BJ (cell line): ENCODE measurements at regions of chr7 and their contacts with region 1.

Region 1: DNA sequence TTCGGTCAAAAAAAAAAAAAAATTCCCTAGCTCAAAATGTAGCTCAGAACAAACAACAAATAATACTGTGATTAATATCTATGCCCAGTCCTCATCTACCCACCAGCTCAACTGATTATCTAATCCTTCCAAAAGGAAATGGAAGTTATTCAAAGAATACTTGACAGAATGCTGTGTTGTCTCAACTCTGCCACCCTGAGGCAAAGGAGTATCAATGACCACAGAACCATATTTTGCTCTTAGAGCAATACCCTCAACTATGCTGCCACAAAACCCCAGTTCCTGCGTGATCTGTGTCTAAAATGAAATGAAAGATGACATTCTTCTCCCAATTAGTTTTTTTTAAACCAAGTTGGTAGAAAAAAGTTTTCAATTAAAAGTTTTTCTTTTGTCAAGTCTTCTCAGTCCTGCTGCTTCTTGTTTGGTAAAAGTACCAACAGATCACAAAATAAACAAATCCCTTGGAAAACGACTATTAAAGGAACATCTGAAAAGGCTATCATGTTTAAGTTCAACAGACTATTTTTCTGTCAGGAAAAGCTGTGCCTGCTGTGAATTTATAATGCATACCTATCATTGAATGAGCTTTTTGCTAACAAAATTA is 21.6 kb downstream of the RBM28 start:
- DNase-seq: no peak
- H3K4me3 ChIP-seq: no peak overlapping the region
- H3K27me3 ChIP-seq: no peaks in the 10 kb centered on the region
- CTCF ChIP-seq: peak; percentile 67

Region 2: GRCh38 chr7:127844707-127845331 is 477.3 kb before region 1 on chr7:
- CTCF ChIA-PET with region 1: no interaction called
- POLR2A ChIA-PET with region 1: no interaction called
- DNase-seq: no peak
- H3K4me3 ChIP-seq: no peak overlapping the region
- H3K27me3 ChIP-seq: no peaks in the 10 kb centered on the region
- CTCF ChIP-seq: no peak

Region 3: GRCh38 chr7:127927348-127927696 is 394.8 kb before region 1 on chr7:
- CTCF ChIA-PET with region 1: no interaction called
- POLR2A ChIA-PET with region 1: no interaction called
- DNase-seq: no peak
- H3K4me3 ChIP-seq: no peak overlapping the region
- H3K27me3 ChIP-seq: no peaks in the 10 kb centered on the region
- CTCF ChIP-seq: no peak

Region 4: GRCh38 chr7:128209229-128210035 is 112.7 kb before region 1 on chr7:
- CTCF ChIA-PET with region 1: interaction called, 14 read pairs
- POLR2A ChIA-PET with region 1: no interaction called
- DNase-seq: no peak
- H3K4me3 ChIP-seq: no peak overlapping the region
- H3K27me3 ChIP-seq: peaks cover 15% of the 10 kb centered on the region
- CTCF ChIP-seq: peak; percentile 97

Region 5: GRCh38 chr7:128217030-128217805 is 104.9 kb before region 1 on chr7:
- CTCF ChIA-PET with region 1: interaction called, 14 read pairs
- POLR2A ChIA-PET with region 1: no interaction called
- DNase-seq: peak; percentile 34
- H3K4me3 ChIP-seq: no peak overlapping the region
- H3K27me3 ChIP-seq: no peaks in the 10 kb centered on the region; the same call in 1 of the 2 replicates
- CTCF ChIP-seq: no peak

Region 6: DNA sequence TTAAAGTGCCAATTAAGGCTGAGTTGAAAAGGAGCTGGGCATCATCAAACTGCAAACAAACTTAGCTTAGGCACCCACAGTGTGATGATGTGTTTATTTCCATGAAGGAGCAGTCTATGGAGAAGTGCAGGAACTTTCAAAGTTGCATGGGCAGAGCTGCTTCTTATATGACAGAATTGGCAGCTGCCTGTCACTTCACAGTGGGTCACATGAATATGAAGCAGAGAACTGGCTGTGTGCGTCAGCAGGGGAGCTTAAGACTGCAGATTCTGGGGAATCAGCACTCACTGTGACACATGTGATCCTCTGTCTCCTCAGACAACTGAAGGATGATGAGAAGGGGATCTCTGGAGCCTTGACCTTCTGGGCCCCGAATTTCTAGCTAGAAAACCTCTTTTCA is 15.1 kb before region 1 on chr7:
- CTCF ChIA-PET with region 1: interaction called, 12 read pairs
- POLR2A ChIA-PET with region 1: no interaction called
- DNase-seq: no peak
- H3K4me3 ChIP-seq: no peak overlapping the region
- H3K27me3 ChIP-seq: no peaks in the 10 kb centered on the region
- CTCF ChIP-seq: no peak

Region 7: DNA sequence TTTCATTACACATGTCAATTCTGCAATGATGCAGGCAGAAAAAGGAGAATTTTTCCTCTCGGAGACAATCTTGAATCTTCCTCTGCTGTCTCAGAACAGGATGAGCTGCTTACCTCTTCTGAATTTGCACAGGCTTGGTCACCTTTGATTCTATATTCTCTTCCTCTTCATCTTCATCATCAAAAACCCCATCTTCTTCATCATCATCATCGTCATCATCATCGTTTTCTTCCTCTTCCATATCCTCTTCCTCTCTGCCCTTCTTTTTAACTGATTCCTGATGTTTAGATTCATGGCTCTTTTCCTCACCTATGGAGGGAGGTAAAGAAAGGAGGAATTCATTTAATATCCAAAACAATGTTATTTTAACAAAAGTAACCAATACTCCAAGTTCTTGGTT is 13.6 kb after region 1 on chr7:
- CTCF ChIA-PET with region 1: interaction called, 12 read pairs
- POLR2A ChIA-PET with region 1: no interaction called
- DNase-seq: no peak
- H3K4me3 ChIP-seq: no peak overlapping the region
- H3K27me3 ChIP-seq: no peaks in the 10 kb centered on the region
- CTCF ChIP-seq: no peak